Caco-2 (cell line): ENCODE measurements at regions of chr10 and their contacts with region 1.

Region 1: GRCh38 chr10:30534465-30535144 is 94.9 kb downstream of the LYZL2 start:
- DNase-seq: peak; percentile 84 to 85
- H3K4me3 ChIP-seq: no peak overlapping the region
- H3K4me3 Mint-ChIP-seq: peak overlapping the region; percentile 13
- H3K27ac Mint-ChIP-seq: peak overlapping the region; percentile 34
- H3K4me1 ChIP-seq: peaks cover 41% of the 10 kb centered on the region
- H3K4me1 Mint-ChIP-seq: peaks cover 48% of the 10 kb centered on the region
- H3K27me3 ChIP-seq: no peaks in the 10 kb centered on the region
- H3K27me3 Mint-ChIP-seq: no peaks in the 10 kb centered on the region
- CTCF ChIP-seq: peak; percentile 89 to 91

Region 2: DNA sequence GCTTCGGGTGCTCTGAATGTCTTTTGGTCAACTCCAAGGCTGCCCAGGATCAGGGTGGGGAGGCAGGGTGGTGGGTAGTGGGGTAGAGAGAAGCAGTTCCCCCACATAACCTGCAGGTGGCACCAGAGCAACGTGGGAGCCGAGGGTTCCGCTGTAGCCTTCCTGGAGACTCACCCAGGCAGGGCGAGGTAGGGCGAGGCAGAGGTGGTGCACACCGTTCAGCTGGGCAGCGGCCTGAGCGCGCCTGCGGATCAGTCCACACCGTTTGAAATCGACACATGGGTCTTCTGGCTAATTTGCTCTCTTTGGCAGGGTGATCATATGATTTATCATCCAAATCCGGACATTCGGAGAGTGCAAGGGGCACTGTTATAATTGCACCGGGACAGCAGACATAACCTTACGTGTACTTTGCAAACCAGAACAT is 142.0 kb before region 1 on chr10:
- CTCF ChIA-PET with region 1: interaction called, 3 read pairs
- POLR2A ChIA-PET with region 1: no interaction called
- intact Hi-C with region 1: loop called (anchors 1 kb)
- DNase-seq: peak; percentile 84 to 90
- H3K4me3 ChIP-seq: no peak overlapping the region
- H3K4me3 Mint-ChIP-seq: peak overlapping the region; percentile 49
- H3K27ac Mint-ChIP-seq: no peak overlapping the region
- H3K4me1 ChIP-seq: no peaks in the 10 kb centered on the region
- H3K4me1 Mint-ChIP-seq: no peaks in the 10 kb centered on the region
- H3K27me3 ChIP-seq: no peaks in the 10 kb centered on the region; the same call in 1 of the 2 replicates
- H3K27me3 Mint-ChIP-seq: peaks cover 12% of the 10 kb centered on the region
- CTCF ChIP-seq: peak; percentile 99

Region 3: GRCh38 chr10:30433730-30434272 is 100.8 kb before region 1 on chr10 and contains the start of gene MAP3K8:
- CTCF ChIA-PET with region 1: interaction called, 3 read pairs
- POLR2A ChIA-PET with region 1: interaction called, 3 read pairs
- intact Hi-C with region 1: loop called (anchors 1 kb)
- DNase-seq: peak; percentile 95 to 96
- H3K4me3 ChIP-seq: peak within 1 kb of the TSS; percentile 91
- H3K4me3 Mint-ChIP-seq: peak within 1 kb of the TSS; percentile 92
- H3K27ac Mint-ChIP-seq: peak within 1 kb of the TSS; percentile 97
- H3K4me1 ChIP-seq: peaks cover 47% of the 10 kb centered on the region
- H3K4me1 Mint-ChIP-seq: peaks cover 56% of the 10 kb centered on the region
- H3K27me3 ChIP-seq: no peaks in the 10 kb centered on the region
- H3K27me3 Mint-ChIP-seq: no peaks in the 10 kb centered on the region
- CTCF ChIP-seq: peak in 1 of 2 experiments; percentile 1
- total RNA-seq, gene MAP3K8: 17.9 and 18.8 TPM in 2 replicates

Region 4: DNA sequence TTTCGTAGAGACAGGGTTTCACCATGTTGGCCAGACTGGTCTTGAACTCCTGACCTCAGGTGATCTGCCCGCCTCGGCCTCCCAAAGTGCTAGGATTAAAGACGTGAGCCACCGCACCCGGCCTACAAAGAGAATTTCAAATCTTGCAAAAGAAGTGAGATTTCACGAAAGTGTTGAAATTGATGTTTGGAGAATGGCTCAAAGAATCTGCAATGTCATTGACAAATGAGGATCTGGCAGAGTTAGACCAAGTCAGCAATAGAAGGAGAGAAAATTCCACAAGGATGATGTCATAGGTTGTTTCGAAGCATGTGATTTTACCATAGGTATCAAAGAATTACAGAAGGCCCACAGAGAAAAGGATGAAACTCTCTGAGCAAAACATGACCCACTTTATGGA is 23.3 kb after region 1 on chr10:
- CTCF ChIA-PET with region 1: no interaction called
- POLR2A ChIA-PET with region 1: no interaction called
- intact Hi-C with region 1: loop called (anchors 2 kb)
- DNase-seq: peak in 1 of 2 experiments; percentile 64
- H3K4me3 ChIP-seq: no peak overlapping the region
- H3K4me3 Mint-ChIP-seq: no peak overlapping the region
- H3K27ac Mint-ChIP-seq: no peak overlapping the region
- H3K4me1 ChIP-seq: peaks cover 17% of the 10 kb centered on the region
- H3K4me1 Mint-ChIP-seq: peaks cover 7% of the 10 kb centered on the region
- H3K27me3 ChIP-seq: no peaks in the 10 kb centered on the region
- H3K27me3 Mint-ChIP-seq: peaks cover 2% of the 10 kb centered on the region
- CTCF ChIP-seq: no peak

Region 5: DNA sequence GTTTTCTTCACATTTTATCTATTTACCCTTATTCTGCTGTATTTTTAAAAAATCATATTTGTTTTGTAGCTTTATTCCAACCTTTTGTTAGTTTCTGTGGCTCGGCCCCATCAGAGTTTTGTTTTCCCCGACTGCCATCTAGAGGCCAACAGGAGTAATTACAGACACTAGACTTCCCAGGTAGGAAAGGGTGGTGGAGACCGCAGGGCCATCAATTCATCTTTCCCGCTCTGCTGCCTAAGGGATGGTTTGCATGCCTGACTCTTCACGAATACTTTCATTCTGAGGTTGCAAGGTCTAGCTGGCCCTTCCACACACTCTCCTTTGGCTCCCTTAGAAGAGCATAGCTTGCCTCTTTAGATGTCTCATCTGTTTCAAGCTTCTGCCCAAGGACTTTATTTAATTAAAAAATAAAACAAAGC is 56.7 kb after region 1 on chr10:
- CTCF ChIA-PET with region 1: interaction called, 16 read pairs
- POLR2A ChIA-PET with region 1: no interaction called
- intact Hi-C with region 1: loop called (anchors 1 kb)
- DNase-seq: peak in 1 of 2 experiments; percentile 61
- H3K4me3 ChIP-seq: no peak overlapping the region
- H3K4me3 Mint-ChIP-seq: no peak overlapping the region
- H3K27ac Mint-ChIP-seq: no peak overlapping the region
- H3K4me1 ChIP-seq: no peaks in the 10 kb centered on the region
- H3K4me1 Mint-ChIP-seq: peaks cover 6% of the 10 kb centered on the region
- H3K27me3 ChIP-seq: no peaks in the 10 kb centered on the region
- H3K27me3 Mint-ChIP-seq: peaks cover 6% of the 10 kb centered on the region
- CTCF ChIP-seq: peak; percentile 81 to 84